ENCODE measurements at regions of chr10 and their contacts with region 1.

Region 1: GRCh38 chr10:124916585-124917427 is 25.1 kb upstream of the ZRANB1 start:
- DNase-seq: peak; percentile 99
- ATAC-seq: peak; percentile 95
- H3K4me3 Mint-ChIP-seq: peak overlapping the region; percentile 92
- H3K27ac Mint-ChIP-seq: peak overlapping the region; percentile 92
- H3K4me1 Mint-ChIP-seq: peaks cover 38% of the 10 kb centered on the region
- H3K27me3 Mint-ChIP-seq: no peaks in the 10 kb centered on the region

Region 2: DNA sequence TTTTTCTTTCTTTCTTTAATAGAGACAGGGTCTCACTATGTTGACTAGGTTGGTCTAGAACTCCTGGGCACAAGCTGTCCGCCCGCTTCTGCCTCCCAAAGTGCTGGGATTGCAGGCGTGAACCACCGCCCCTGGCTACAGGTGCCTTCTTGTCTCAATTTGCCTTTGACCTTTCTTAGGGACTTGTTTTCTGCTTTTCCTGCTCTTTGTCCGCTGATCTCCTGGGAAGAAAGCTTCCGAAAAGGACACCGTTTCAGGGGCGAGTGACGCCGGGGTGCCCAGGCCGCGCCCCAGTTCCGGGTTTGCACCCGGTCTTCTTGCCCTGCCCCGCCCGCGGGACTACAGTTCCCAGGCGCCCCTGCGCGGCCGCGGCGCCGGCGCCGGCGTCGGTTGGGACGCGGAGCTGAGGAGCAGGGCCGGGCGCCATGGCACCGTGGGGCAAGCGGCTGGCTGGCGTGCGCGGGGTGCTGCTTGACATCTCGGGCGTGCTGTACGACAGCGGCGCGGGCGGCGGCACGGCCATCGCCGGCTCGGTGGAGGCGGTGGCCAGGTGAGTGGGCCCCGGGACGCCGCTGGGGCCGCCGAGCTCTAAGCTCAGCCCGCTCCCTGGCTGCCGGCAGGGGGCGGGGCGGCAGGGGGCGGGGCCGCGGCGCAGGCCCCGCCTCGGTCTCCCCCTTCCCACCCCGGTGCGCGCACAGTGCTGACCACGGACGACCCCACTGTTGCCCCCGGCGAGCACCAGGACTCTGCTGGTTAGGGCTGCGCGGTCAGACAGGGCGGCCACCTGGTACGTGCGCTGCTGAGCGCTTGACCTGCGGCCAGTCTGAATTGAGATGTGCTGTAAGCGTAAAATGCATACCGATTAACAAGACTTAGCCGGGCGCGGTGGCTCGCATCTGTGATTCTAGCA is 455.1 kb before region 1 on chr10 and contains the start of gene LHPP:
- CTCF ChIA-PET with region 1: no interaction called
- POLR2A ChIA-PET with region 1: no interaction called
- intact Hi-C with region 1: loop called in 1 of 2 experiments (anchors 1 kb)
- DNase-seq: peak; percentile 92
- ATAC-seq: peak; percentile 97
- H3K4me3 Mint-ChIP-seq: peak within 1 kb of the TSS; percentile 71
- H3K27ac Mint-ChIP-seq: peak within 1 kb of the TSS; percentile 96
- H3K4me1 Mint-ChIP-seq: peaks cover 25% of the 10 kb centered on the region
- H3K27me3 Mint-ChIP-seq: peaks cover 2% of the 10 kb centered on the region
- total RNA-seq, gene LHPP: 11.5 to 14.0 TPM

Region 3: DNA sequence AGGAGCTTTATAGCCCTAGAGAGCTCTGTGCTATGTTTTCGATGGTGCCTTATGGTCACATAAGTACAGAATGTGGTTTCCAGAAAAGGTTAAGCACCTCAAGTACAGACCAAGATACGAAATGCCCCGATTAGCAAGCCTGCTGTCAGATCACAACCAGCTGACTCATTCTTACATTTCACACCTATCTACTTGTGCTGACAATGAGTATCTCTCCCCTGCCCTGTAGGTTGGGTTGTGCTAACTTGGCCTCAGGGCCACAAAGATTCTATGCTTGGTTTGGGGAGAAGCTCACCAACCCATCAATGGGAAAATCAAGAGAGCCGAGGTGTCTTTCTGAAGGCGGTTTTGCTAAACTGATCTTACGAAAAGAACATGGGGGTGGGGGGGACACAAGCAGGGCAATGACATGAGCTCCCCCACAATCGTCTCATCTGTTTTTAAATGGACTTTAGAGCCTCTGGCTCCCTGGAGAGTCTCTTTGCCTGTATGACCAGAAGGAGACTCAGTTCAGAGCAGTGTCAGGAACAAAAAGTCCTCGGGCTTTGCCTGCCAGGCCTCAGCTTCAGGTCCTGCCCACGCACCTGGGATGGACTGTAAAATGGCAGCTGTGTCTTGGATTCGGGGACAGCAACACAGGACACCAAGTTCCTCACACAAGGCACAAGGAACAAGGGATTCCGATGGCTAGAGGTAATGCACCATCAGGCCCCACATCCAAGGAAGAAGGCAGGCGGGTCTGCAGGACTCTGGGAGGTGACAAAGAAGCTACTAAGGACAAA is 227.7 kb before region 1 on chr10:
- CTCF ChIA-PET with region 1: no interaction called
- POLR2A ChIA-PET with region 1: no interaction called
- intact Hi-C with region 1: loop called in 1 of 2 experiments (anchors 1 kb)
- DNase-seq: peak; percentile 81
- ATAC-seq: peak; percentile 89
- H3K4me3 Mint-ChIP-seq: peak overlapping the region; percentile 8
- H3K27ac Mint-ChIP-seq: peak overlapping the region; percentile 84
- H3K4me1 Mint-ChIP-seq: peaks cover 81% of the 10 kb centered on the region
- H3K27me3 Mint-ChIP-seq: peaks cover 2% of the 10 kb centered on the region

Region 4: GRCh38 chr10:124802313-124802675 is 114.5 kb before region 1 on chr10:
- CTCF ChIA-PET with region 1: interaction called, 3 read pairs
- POLR2A ChIA-PET with region 1: interaction called, 4 read pairs
- intact Hi-C with region 1: loop called (anchors 1 to 5 kb)
- DNase-seq: no peak
- ATAC-seq: peak; percentile 43
- H3K4me3 Mint-ChIP-seq: peak overlapping the region; percentile 91
- H3K27ac Mint-ChIP-seq: peak overlapping the region; percentile 90
- H3K4me1 Mint-ChIP-seq: peaks cover 19% of the 10 kb centered on the region
- H3K27me3 Mint-ChIP-seq: no peaks in the 10 kb centered on the region

Region 5: DNA sequence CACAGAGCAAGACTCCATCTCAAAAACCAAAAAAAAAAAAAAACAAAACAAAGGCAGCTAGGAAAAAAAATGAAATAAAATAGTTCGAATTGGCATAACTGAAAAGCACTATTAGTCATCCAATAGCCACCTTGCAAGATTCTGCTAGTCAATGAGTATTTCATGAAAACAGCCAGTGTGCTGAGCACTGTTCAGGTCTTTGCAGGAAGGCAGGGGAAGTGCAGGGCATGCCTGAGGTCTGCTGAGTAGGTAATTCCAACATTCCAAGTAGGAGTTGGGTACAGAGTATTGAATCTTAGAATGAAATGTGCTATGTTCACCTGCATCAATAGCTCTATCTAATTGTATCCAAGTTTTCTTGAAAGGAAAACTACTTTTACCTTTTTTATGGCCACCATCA is 92.3 kb before region 1 on chr10:
- CTCF ChIA-PET with region 1: no interaction called
- POLR2A ChIA-PET with region 1: no interaction called
- intact Hi-C with region 1: no loop called
- DNase-seq: no peak
- ATAC-seq: no peak
- H3K4me3 Mint-ChIP-seq: no peak overlapping the region
- H3K27ac Mint-ChIP-seq: no peak overlapping the region
- H3K4me1 Mint-ChIP-seq: peaks cover 2% of the 10 kb centered on the region
- H3K27me3 Mint-ChIP-seq: no peaks in the 10 kb centered on the region

Region 6: DNA sequence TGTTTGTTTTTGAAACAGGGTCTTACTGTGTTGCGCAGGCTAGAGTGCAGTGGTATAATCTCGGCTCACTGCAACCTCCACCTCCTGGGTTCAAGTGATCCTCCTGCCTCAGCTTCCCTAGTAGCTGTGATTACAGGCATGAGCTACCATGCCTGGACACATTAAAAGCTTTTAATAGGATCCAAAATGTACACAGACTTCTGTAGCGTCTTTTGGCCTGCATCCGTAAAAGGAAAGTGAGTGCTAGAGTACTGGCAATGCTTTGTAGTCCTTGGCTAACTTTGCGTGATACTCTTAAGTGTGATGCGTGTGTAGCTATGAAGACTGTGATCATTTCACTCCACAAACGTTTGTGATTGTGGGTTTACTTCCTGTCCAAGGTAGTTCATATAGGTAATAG is 38.4 kb after region 1 on chr10:
- CTCF ChIA-PET with region 1: no interaction called
- POLR2A ChIA-PET with region 1: no interaction called
- intact Hi-C with region 1: loop called in 1 of 2 experiments (anchors 5 kb)
- DNase-seq: no peak
- ATAC-seq: no peak
- H3K4me3 Mint-ChIP-seq: no peak overlapping the region
- H3K27ac Mint-ChIP-seq: no peak overlapping the region
- H3K4me1 Mint-ChIP-seq: peaks cover 44% of the 10 kb centered on the region
- H3K27me3 Mint-ChIP-seq: no peaks in the 10 kb centered on the region

Region 7: DNA sequence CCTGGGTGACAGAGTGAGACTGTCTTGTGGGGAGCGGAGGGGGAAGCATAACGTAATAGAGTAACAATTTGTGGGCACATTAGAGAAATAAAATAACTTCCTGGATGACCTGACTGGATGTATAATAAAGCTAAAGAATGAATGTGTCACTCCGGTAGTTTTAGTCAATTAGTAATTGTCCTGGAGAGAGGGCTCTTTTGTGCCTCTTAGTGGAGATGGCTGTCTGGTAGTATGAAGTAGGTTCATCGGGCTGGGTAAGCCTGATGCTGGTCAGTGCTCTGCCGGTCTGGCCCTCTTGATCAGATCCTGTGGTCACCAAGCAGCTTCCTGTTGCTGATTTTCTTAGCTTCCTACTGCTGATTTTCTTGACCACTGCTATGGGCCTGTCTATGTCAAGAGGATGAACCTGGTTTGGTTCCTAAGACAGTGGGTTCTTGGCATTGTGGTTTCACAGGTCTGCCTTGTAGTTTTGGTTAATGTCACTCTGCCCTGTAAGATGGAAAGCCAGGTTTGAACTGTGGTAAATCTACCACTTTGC is 59.2 kb after region 1 on chr10:
- CTCF ChIA-PET with region 1: no interaction called
- POLR2A ChIA-PET with region 1: no interaction called
- intact Hi-C with region 1: no loop called
- DNase-seq: no peak
- ATAC-seq: peak; percentile 86
- H3K4me3 Mint-ChIP-seq: no peak overlapping the region
- H3K27ac Mint-ChIP-seq: peak overlapping the region; percentile 55
- H3K4me1 Mint-ChIP-seq: peaks cover 17% of the 10 kb centered on the region
- H3K27me3 Mint-ChIP-seq: no peaks in the 10 kb centered on the region

Region 8: GRCh38 chr10:125489731-125490130 is 572.9 kb after region 1 on chr10:
- CTCF ChIA-PET with region 1: no interaction called
- POLR2A ChIA-PET with region 1: no interaction called
- intact Hi-C with region 1: no loop called
- DNase-seq: no peak
- ATAC-seq: no peak
- H3K4me3 Mint-ChIP-seq: no peak overlapping the region
- H3K27ac Mint-ChIP-seq: no peak overlapping the region
- H3K4me1 Mint-ChIP-seq: no peaks in the 10 kb centered on the region
- H3K27me3 Mint-ChIP-seq: peaks cover 4% of the 10 kb centered on the region

Region 9: DNA sequence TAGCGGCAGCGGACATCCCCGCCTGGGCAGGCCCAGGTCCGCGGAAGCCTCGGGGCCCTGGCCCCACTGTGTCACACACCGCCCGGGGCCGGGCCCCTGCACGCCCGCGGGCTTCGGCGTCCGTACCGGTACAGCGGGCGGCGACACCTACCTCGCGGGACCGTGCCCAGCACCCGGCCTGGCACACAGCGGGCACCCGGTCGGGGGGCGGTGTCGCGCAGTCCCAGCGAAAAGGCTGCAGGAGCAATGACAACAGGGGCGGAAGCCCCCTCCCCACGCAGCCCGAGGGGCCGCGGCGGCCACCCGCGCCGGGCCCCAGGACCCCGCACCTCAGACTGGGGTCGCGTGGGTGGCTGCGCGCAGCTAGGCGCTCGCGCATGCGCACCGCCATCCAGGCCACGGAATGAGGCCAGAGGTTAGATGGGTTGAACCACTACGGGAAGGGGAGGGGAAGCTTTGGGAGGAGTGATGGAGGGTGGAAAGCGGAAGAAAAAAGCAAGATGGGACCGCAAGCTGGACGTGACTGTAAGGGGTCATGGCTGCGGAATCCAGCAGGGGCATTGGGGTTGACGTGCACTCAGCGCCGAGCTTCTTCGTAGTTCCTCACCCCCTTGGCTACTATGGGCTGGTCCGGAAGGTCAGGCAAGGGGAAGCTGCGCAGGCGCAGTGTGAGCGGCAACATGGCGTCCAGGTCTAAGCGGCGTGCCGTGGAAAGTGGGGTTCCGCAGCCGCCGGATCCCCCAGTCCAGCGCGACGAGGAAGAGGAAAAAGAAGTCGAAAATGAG is 906.3 kb after region 1 on chr10 and contains the starts of genes BCCIP and UROS:
- CTCF ChIA-PET with region 1: no interaction called
- POLR2A ChIA-PET with region 1: no interaction called
- intact Hi-C with region 1: loop called in 1 of 2 experiments (anchors 5 kb)
- DNase-seq: peak; percentile 94
- ATAC-seq: peak; percentile 87
- H3K4me3 Mint-ChIP-seq: peak within 1 kb of the TSS; percentile 68
- H3K27ac Mint-ChIP-seq: peak within 1 kb of the TSS; percentile 27
- H3K4me1 Mint-ChIP-seq: peaks cover 42% of the 10 kb centered on the region
- H3K27me3 Mint-ChIP-seq: no peaks in the 10 kb centered on the region
- total RNA-seq, gene BCCIP: 106 to 115 TPM
- total RNA-seq, gene UROS: 37.3 to 39.6 TPM